Activated B cell treated with CpG ODN at 0.5 μM for 24 hours (primary cell): ENCODE measurements at regions of chr6 and their contacts with region 1.

Region 1: DNA sequence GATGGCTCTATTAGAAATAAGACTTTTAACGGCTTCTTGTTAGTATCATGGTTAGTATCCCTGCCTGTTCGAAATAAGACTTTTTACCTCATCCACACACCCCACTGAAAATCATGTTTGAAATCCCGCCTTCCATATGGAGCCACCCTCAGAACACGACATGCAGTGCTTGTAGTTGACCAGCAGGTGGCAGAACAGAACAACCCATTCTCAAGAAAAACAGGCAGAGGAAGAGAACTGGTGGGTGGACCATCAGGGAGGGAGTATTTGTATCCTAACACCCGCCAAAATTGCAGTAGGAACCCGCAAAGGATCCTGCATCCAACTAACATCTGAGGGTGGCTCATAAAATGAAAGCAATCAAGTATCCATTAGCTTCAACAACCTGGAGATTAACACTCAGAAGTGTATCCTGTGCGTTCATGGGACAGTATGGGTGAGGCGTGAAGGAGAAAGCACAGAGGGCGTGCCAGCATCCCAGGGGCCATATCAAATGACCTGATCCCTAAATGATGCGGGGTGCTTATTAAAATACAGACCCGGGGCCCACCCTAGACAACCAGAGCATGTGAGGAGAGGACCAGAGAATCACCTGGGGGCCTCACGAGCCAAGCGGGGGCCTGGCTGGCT is 89.6 kb upstream of the NHSL1 start:
- DNase-seq: no peak
- ATAC-seq: peak; percentile 48
- H3K4me3 Mint-ChIP-seq: no peak overlapping the region
- H3K27ac Mint-ChIP-seq: no peak overlapping the region
- H3K4me1 Mint-ChIP-seq: peaks cover 27% of the 10 kb centered on the region
- H3K27me3 Mint-ChIP-seq: no peaks in the 10 kb centered on the region
- CTCF ChIP-seq: peak; percentile 71

Region 2: GRCh38 chr6:138129190-138129589 is 459.7 kb before region 1 on chr6:
- CTCF ChIA-PET with region 1: no interaction called
- POLR2A ChIA-PET with region 1: no interaction called
- intact Hi-C with region 1: no loop called
- DNase-seq: no peak
- ATAC-seq: no peak
- H3K4me3 Mint-ChIP-seq: no peak overlapping the region
- H3K27ac Mint-ChIP-seq: no peak overlapping the region
- H3K4me1 Mint-ChIP-seq: no peaks in the 10 kb centered on the region
- H3K27me3 Mint-ChIP-seq: peaks cover 10% of the 10 kb centered on the region
- CTCF ChIP-seq: no peak

Region 3: DNA sequence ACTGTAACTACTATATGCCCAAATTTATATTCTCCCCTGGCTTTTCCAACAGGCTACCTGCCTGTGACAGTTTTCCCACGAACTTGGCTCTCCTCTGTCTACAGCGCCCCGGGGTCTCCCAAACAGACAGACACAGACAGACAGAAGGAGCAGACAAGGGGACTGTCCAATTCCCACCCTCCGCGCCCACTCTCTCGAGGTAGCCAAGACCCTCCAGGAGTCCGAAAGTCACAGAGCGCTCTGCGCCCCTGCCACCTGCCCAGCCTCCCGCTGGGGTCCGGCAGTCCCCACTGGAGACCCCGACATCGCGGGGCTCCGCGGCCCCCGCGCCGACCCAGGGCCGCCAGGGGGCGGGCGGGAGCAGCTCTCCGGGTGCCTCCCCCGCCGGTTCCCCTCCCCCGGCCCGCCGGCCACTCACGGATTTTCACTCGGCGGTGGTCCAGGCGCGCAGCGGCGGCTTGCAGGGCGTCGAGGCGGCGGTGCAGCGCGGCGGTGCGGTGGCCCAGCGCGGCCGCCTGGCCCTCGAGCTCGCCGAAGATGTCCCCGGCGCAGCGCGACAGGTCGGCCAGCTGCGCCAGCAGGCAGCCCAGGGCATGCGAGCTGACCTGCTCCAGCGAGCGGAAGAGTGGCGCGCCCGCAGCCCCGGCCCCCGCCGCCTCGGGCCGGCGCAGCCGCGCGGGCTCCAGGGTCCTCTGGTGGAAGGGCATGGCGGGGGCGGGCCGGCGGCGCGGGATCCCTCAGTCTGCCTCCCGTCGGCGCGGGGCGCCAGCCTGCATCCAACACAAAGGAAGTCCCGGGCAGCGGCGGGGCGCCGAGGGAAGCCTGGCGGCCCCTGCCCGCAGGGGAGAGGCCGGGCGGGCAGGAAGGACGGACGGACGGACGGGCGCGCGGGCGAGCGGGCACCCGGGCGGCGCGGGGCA is 103.4 kb after region 1 on chr6:
- CTCF ChIA-PET with region 1: interaction called, 8 read pairs
- POLR2A ChIA-PET with region 1: no interaction called
- intact Hi-C with region 1: loop called (anchors 1 kb)
- DNase-seq: peak; percentile 75
- ATAC-seq: peak; percentile 79
- H3K4me3 Mint-ChIP-seq: peak overlapping the region; percentile 87
- H3K27ac Mint-ChIP-seq: no peak overlapping the region
- H3K4me1 Mint-ChIP-seq: peaks cover 11% of the 10 kb centered on the region
- H3K27me3 Mint-ChIP-seq: peaks cover 31% of the 10 kb centered on the region
- CTCF ChIP-seq: peak; percentile 63

Region 4: DNA sequence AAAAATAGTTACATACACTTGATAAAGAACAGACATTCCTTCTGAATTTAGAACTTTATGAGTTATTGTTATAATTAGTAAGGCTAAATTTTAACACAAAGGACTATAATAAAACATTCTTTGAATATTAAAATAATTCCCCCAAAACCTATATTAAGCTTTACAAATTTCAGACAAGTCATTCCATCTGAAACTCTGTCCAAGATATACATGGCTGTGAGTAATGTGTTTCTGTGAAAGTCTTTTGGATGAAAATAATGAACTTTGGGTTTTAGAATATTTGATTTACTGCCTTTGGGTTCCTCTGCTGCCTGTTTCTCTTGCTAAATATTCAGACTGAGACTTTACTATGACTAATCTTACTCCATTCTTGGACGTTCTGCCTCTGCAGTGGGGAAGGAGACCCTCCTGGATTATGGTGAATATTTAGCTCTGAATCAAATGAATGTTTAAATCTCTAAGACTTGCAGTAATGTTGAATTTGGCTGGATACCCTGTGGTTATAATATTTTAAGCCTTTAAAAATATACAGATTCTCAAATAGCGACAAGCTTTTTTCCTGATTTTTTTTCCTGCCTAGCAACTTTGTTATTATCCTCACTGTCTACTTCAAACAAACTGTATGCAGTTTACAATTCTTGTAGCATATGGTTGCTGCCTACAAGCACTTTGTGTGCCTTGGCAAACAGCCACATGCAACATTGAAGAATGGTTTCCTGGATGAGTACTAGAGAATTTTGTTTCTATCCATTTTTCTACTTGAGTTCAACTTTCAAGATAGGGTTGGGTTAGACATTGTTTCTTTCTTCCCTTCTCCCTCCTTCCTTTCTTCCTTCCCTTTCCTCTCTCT is 651.5 kb after region 1 on chr6:
- CTCF ChIA-PET with region 1: no interaction called
- POLR2A ChIA-PET with region 1: no interaction called
- intact Hi-C with region 1: no loop called
- DNase-seq: no peak
- ATAC-seq: no peak
- H3K4me3 Mint-ChIP-seq: no peak overlapping the region
- H3K27ac Mint-ChIP-seq: no peak overlapping the region
- H3K4me1 Mint-ChIP-seq: no peaks in the 10 kb centered on the region
- H3K27me3 Mint-ChIP-seq: no peaks in the 10 kb centered on the region
- CTCF ChIP-seq: no peak